Dorsolateral prefrontal cortex (tissue), 120 donors: ENCODE measurements at regions of chr6 and their contacts with region 1.

Region 1: GRCh38 chr6:159862103-159862502 is 28.7 kb upstream of the MAS1 start:
- DNase-seq: no peak
- H3K4me3 ChIP-seq: no peak overlapping the region
- H3K27ac ChIP-seq: no peak overlapping the region
- H3K27me3 ChIP-seq: peaks cover 0 to 9% (median 0%) of the 10 kb centered on the region in 45 donors
- CTCF ChIP-seq: no peak

Region 2: DNA sequence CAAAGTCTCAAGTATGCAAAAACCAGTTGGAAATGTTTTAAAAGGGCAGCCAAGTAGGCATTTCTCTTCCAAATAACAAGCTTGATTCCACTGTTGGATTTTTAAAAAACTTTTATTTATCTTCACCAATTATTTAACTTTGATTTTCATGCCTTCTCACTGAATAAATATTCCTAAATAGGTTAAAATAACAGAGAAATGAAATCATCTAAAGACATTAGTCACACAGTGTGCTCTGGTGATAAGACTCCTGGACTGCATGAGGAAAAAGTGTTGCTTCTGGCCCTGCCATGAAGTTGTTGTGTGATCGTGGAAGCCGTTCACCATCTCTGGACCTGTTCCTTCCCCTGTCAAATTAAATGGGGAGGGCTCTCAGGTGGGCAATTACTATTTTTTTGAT is 73.0 kb after region 1 on chr6:
- intact Hi-C with region 1: loop called (anchors 2 to 5 kb)
- DNase-seq: no peak
- H3K4me3 ChIP-seq: no peak overlapping the region
- H3K27ac ChIP-seq: peak overlapping the region in 2 of 59 donors; percentile 2 to 11
- H3K27me3 ChIP-seq: no peaks in the 10 kb centered on the region
- CTCF ChIP-seq: no peak

Region 3: DNA sequence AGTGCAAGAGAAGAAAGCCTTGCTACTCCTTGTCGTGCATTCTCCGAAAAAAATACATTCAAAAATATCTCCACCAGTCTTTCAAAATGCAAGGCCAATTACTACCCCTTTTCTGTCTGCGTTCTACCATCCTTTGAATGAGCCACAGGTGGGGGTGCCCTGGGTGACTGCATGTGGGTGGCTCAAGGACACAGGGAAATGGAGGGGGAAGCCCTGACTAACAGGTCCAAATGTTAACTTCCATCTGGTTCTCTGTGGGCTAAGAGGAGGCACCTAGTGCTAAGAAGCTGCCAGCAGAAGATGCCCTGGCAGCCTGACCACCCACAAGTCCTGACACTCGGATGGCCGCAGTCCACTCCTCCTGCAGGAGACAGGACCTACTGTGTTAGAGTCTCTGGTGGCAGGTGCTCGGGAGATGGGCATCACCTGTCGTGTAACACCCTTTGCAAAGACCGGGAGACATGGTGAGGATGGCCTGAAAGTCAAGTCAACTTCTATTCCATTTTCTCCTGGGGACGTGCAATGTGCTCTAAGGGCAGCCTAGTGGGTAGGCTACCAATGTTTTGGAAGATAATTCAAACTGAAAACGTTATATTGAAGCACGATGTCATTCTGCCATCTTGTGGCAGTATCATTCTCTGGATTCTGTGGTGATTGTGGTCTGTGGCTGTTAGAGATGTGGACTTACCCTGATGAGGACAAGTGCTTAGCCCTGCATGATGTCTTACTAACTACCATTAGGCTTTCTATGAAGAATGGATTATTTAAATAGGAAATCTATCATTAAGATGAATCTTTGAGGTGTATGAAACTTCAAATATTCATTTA is 79.4 kb after region 1 on chr6:
- intact Hi-C with region 1: loop called (anchors 2 to 5 kb)
- DNase-seq: no peak
- H3K4me3 ChIP-seq: no peak overlapping the region
- H3K27ac ChIP-seq: no peak overlapping the region
- H3K27me3 ChIP-seq: peaks cover 0 to 4% (median 0%) of the 10 kb centered on the region in 45 donors
- CTCF ChIP-seq: peak; percentile 11 to 79 (median 60)

Region 4: DNA sequence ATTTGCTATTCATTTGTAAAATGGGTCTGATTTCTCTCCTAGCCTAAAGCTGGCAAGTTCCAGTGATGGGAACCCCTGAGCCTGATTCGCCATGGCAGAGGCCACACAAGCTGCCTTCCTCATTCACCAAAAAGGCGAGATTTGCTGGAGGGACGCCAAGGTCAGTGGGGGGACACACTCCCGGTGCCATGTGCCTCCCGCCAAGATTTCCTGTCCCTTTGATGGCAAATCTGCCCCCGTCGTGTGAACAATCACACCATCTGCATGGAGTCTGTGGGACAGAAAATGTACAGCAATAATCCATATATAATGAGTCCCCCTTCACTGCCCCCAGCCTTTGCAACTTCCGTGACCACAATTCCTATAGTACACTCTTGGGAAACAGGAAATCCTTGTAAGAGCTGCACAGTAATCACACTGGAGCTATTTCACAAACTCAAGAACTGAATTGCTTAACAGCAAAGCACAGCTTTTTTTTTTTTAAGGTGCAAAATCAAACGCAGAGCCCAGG is 91.0 kb after region 1 on chr6:
- intact Hi-C with region 1: no loop called
- DNase-seq: no peak
- H3K4me3 ChIP-seq: peak overlapping the region in 1 of 59 donors; percentile 16
- H3K27ac ChIP-seq: peak overlapping the region in 1 of 59 donors; percentile 3
- H3K27me3 ChIP-seq: peaks cover 0 to 4% (median 0%) of the 10 kb centered on the region in 45 donors
- CTCF ChIP-seq: no peak

Region 5: GRCh38 chr6:160088069-160088783 is 226.1 kb after region 1 on chr6:
- intact Hi-C with region 1: loop called in 1 of 2 experiments (anchors 10 kb)
- DNase-seq: peak in 9 of 10 donors; percentile 23 to 75 (median 66)
- H3K4me3 ChIP-seq: peak overlapping the region in 1 of 59 donors; percentile 7
- H3K27ac ChIP-seq: peak overlapping the region in 5 of 59 donors; percentile 11 to 65 (median 35)
- H3K27me3 ChIP-seq: no peaks in the 10 kb centered on the region
- CTCF ChIP-seq: peak in 55 of 56 donors; percentile 34 to 80 (median 67)

Region 6: GRCh38 chr6:160417146-160417545 is 555.0 kb after region 1 on chr6:
- intact Hi-C with region 1: no loop called
- DNase-seq: no peak
- H3K4me3 ChIP-seq: no peak overlapping the region
- H3K27ac ChIP-seq: no peak overlapping the region
- H3K27me3 ChIP-seq: peaks cover 0 to 7% (median 0%) of the 10 kb centered on the region in 45 donors
- CTCF ChIP-seq: no peak

Region 7: GRCh38 chr6:160534050-160534696 is 672.1 kb after region 1 on chr6:
- intact Hi-C with region 1: loop called in 1 of 2 experiments (anchors 10 kb)
- DNase-seq: peak in 9 of 10 donors; percentile 16 to 68 (median 47)
- H3K4me3 ChIP-seq: peak overlapping the region in 42 of 59 donors; percentile 1 to 59 (median 30)
- H3K27ac ChIP-seq: no peak overlapping the region
- H3K27me3 ChIP-seq: peaks cover 0 to 3% (median 0%) of the 10 kb centered on the region in 45 donors
- CTCF ChIP-seq: peak; percentile 85 to 99 (median 96)